Testis (tissue), 5 donors: ENCODE measurements at regions of chr7 and their contacts with region 1.

Region 1: DNA sequence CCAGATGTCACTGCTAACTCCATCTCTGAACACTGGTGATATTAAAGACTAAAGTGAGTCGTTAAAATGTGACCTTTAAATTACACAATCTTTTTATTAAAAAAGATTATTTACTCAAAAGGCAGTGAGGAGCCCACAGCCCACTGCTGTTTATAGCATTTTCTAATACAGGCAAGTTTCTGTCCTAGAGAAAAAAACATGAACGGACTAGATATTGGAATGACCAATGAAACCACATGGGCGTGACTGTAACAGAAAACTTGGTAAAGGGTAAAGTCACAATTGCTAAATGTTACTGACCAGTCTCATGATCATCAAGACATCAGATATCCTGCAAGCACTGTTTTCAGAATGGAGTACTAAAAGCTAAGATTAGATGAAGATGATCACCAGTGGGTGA is 78.7 kb downstream of the FEZF1 start:
- DNase-seq: no peak
- H3K4me3 ChIP-seq: no peak overlapping the region
- H3K27ac ChIP-seq: no peak overlapping the region
- H3K4me1 ChIP-seq: no peaks in the 10 kb centered on the region
- H3K27me3 ChIP-seq: no peaks in the 10 kb centered on the region
- CTCF ChIP-seq: no peak
- POLR2A ChIP-seq: no peak

Region 2: GRCh38 chr7:122166708-122167107 is 59.2 kb before region 1 on chr7:
- intact Hi-C with region 1: no loop called
- DNase-seq: no peak
- H3K4me3 ChIP-seq: no peak overlapping the region
- H3K27ac ChIP-seq: no peak overlapping the region
- H3K4me1 ChIP-seq: no peaks in the 10 kb centered on the region
- H3K27me3 ChIP-seq: no peaks in the 10 kb centered on the region
- CTCF ChIP-seq: no peak
- POLR2A ChIP-seq: no peak

Region 3: DNA sequence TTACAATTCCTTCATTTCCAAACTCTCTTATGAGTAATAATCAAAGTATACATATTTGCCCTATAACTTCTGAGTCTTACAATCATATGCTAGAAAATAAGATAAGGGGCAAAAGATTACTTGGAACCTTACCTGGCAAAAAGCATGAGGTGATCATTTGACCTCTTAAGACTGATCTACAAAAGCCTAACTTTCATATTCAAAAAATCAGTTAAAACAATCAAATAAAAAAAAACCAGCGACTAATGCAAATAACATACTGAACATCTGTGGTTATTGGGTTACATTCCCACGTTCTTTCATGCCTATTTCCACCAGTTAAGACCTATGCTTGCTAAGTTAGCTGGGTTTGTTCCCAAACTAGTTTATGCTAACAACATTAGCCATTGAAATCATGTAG is 285.4 kb after region 1 on chr7:
- intact Hi-C with region 1: no loop called
- DNase-seq: no peak
- H3K4me3 ChIP-seq: no peak overlapping the region
- H3K27ac ChIP-seq: no peak overlapping the region
- H3K4me1 ChIP-seq: no peaks in the 10 kb centered on the region
- H3K27me3 ChIP-seq: no peaks in the 10 kb centered on the region
- CTCF ChIP-seq: no peak
- POLR2A ChIP-seq: no peak

Region 4: GRCh38 chr7:122528879-122529481 is 303.1 kb after region 1 on chr7:
- intact Hi-C with region 1: loop called (anchors 10 kb)
- DNase-seq: no peak
- H3K4me3 ChIP-seq: no peak overlapping the region
- H3K27ac ChIP-seq: no peak overlapping the region
- H3K4me1 ChIP-seq: no peaks in the 10 kb centered on the region
- H3K27me3 ChIP-seq: no peaks in the 10 kb centered on the region
- CTCF ChIP-seq: peak in 2 of 3 experiments; percentile 14 to 76
- POLR2A ChIP-seq: no peak